Heart left ventricle (tissue), 16 donors: ENCODE measurements at regions of chr18 and their contacts with region 1.

Region 1: DNA sequence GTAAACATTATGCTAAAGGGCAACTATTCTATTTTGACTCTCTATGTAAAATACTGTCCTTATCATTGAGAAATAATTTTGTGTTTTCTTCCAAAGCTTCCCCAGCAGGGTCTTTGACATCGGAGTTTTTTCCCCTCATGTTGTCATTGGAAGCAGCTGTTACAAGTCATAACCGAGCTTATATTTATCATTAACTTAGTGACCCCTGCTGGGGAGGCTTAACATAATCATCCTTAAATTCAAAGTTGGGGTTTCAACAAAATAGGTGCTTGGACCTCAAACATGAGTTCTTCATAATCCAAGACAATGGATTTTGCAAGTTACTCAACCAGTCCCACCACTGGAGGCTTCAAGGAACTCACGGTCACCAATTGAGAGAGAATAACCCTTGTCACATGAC is 330.9 kb downstream of the DCC start:
- DNase-seq: no peak
- ATAC-seq: no peak
- H3K4me3 ChIP-seq: no peak overlapping the region
- H3K27ac ChIP-seq: no peak overlapping the region
- H3K4me1 ChIP-seq: no peaks in the 10 kb centered on the region
- H3K27me3 ChIP-seq: no peaks in the 10 kb centered on the region
- CTCF ChIP-seq: peak in 2 of 12 donors; percentile 7 to 17
- POLR2A ChIP-seq: no peak

Region 2: DNA sequence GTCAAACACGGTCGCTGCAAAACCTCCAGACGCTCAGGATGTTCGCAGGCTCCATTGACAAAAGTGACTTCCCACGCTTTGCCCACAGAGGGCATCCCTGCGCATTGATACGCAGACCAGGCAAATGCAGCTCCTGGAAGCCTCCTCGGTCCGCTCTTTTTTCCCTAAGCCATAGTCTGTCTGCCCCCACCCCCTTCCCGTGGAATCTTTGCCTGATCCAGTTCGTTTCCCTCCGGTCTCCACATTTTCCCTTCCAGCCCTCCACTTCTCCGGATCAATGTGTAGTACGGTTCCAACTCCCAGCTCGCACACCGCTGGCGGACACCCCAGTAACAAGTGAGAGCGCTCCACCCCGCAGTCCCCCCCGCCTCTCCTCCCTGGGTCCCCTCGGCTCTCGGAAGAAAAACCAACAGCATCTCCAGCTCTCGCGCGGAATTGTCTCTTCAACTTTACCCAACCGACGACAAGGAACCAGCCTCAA is 331.0 kb before region 1 on chr18 and contains the start of gene DCC:
- intact Hi-C with region 1: loop called in 2 of 10 experiments (anchors 10 kb)
- DNase-seq: peak in 1 of 5 donors; percentile 9
- ATAC-seq: peak in 3 of 4 donors; percentile 52 to 60 (median 56)
- H3K4me3 ChIP-seq: peak within 1 kb of the TSS in 6 of 12 donors; percentile 7 to 17 (median 12)
- H3K27ac ChIP-seq: no peak within 1 kb of the TSS
- H3K4me1 ChIP-seq: peaks cover 0 to 8% (median 0%) of the 10 kb centered on the region in 12 donors
- H3K27me3 ChIP-seq: peaks cover 16 to 71% (median 34%) of the 10 kb centered on the region in 9 donors
- CTCF ChIP-seq: peak in 7 of 12 donors; percentile 20 to 41 (median 25)
- POLR2A ChIP-seq: no peak
- total RNA-seq, gene DCC: 0.02 TPM in 1 of 9 donors, not detected in the others

Region 3: GRCh38 chr18:52605345-52605744 is 65.6 kb before region 1 on chr18:
- intact Hi-C with region 1: no loop called
- DNase-seq: no peak
- ATAC-seq: no peak
- H3K4me3 ChIP-seq: no peak overlapping the region
- H3K27ac ChIP-seq: no peak overlapping the region
- H3K4me1 ChIP-seq: no peaks in the 10 kb centered on the region
- H3K27me3 ChIP-seq: no peaks in the 10 kb centered on the region
- CTCF ChIP-seq: no peak
- POLR2A ChIP-seq: no peak